ENCODE measurements at regions of chr20 and their contacts with region 1.

Region 1: DNA sequence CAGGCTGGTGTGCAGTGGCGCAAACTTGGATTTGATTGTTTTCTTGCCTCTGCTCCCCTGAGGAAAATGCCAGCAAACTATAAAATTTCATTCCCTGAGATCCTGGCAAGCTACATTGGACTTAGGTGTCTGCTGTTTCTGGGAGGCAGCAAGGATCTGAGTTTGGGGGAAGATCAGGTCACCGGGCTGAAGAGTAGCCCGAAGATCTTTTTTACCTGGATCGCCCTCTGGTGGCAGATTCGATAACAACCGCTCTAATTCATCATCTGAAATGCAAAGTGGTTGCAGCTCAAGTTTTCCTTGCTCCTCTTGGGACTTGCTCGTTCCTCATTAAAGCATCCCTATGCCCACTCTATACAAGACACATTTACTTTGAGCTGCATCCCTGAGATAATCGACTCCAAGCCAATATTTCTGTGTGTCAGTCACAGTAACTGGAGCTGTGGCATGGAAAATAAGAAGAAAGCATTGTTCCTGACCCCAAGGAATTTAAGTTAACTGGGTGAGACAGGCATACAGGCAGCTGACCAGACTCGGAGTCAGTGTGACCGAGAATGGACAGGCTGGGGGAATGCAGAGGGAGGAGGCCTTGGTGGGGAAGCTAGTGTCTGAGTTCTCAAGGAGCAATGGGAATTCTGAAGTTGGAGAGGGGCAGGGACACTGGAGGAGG is 131.8 kb upstream of the PROKR2 start:
- DNase-seq: peak; percentile 15 to 36 (median 20)
- H3K4me3 ChIP-seq: no peak overlapping the region
- H3K4me3 Mint-ChIP-seq: no peak overlapping the region
- H3K27ac ChIP-seq: no peak overlapping the region
- H3K27ac Mint-ChIP-seq: no peak overlapping the region
- H3K4me1 ChIP-seq: no peaks in the 10 kb centered on the region
- H3K4me1 Mint-ChIP-seq: peaks cover 0 to 2% (median 0%) of the 10 kb centered on the region in 4 donors
- H3K27me3 ChIP-seq: no peaks in the 10 kb centered on the region
- H3K27me3 Mint-ChIP-seq: peaks cover 17 to 25% of the 10 kb centered on the region in 2 donors

Region 2: DNA sequence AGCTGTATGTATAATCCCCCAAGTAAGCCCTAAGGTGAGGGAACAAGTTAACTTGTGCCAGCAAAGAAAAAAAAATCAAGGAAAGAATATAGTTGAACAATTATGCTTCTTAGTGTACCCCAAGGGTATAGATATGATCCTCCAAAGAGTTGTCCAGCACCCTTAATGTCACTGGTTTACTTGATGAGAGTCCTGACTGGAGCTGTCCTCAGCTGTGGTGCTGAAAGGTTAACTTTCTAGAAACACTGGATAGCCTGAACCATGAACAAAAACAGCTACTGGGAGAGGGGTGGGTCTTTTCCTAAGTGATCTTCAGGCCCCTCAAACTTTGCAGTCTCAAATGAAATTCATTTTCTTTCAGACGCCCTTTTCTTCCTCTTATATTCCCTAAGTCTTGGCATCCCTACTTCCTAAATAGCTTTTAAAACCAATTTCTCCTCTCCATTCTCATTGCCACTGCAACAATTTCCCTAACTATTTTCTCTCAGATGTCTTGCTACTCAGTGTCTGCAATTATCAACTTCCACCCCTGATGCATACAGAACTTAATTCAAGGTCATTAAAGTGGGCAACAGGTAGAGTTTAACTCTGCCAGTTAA is 48.3 kb before region 1 on chr20:
- CTCF ChIA-PET with region 1: no interaction called
- POLR2A ChIA-PET with region 1: no interaction called
- intact Hi-C with region 1: no loop called
- DNase-seq: no peak
- H3K4me3 ChIP-seq: no peak overlapping the region
- H3K4me3 Mint-ChIP-seq: no peak overlapping the region
- H3K27ac ChIP-seq: no peak overlapping the region
- H3K27ac Mint-ChIP-seq: no peak overlapping the region
- H3K4me1 ChIP-seq: no peaks in the 10 kb centered on the region
- H3K4me1 Mint-ChIP-seq: no peaks in the 10 kb centered on the region
- H3K27me3 ChIP-seq: no peaks in the 10 kb centered on the region
- H3K27me3 Mint-ChIP-seq: peaks cover 7 to 9% of the 10 kb centered on the region in 2 donors

Region 3: GRCh38 chr20:5463007-5463686 is 14.6 kb after region 1 on chr20:
- CTCF ChIA-PET with region 1: interaction called, 17 read pairs
- POLR2A ChIA-PET with region 1: no interaction called
- intact Hi-C with region 1: no loop called
- DNase-seq: no peak
- H3K4me3 ChIP-seq: no peak overlapping the region
- H3K4me3 Mint-ChIP-seq: no peak overlapping the region
- H3K27ac ChIP-seq: no peak overlapping the region
- H3K27ac Mint-ChIP-seq: no peak overlapping the region
- H3K4me1 ChIP-seq: no peaks in the 10 kb centered on the region
- H3K4me1 Mint-ChIP-seq: no peaks in the 10 kb centered on the region
- H3K27me3 ChIP-seq: no peaks in the 10 kb centered on the region
- H3K27me3 Mint-ChIP-seq: peaks cover 31 to 37% of the 10 kb centered on the region in 2 donors